Caco-2 (cell line): ENCODE measurements at regions of chr20 and their contacts with region 1.

Region 1: DNA sequence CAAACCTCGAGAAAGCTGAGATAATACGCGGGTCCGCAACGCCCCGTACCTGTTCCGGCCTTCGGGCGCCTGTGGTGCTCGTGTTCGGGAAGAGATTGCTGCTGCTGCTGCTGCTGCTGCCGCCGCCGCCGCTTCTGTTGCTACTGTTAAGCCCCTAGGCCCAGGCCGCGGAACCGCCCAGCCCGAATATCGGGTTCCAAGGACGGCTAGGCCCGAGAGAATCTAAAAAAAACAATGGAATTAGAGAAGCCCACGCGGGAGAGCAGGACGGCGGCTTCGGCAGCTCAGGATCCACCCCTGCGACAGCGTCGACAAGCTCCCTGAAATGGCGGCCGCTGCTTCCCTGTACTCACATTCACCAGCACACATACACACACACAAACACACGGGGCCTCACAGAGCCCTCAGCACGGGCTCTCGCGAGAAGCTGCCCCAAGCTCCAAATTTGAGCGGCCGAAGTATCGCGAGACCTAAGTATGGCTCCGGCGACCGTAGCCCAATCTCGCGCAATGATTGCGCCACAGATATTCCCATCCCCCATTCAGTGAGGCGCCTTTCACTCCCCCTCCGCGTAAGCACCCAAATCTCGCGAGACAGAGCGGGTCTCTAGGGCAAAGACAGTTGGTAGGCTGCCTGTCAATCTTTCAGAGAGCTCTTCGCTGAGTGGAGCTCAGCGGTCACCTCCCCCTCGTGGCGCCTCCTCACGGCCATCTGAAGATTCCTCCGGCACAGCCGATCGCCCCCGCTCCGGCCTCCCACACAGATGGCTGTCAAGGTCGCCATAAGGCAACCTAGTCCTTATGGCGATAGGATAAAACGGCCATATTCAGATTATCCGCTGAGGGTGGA is at the start of gene RBM39:
- DNase-seq: peak; percentile 100
- H3K4me3 ChIP-seq: peak within 1 kb of the TSS; percentile 77
- H3K4me3 Mint-ChIP-seq: peak within 1 kb of the TSS; percentile 80
- H3K27ac Mint-ChIP-seq: peak within 1 kb of the TSS; percentile 96
- H3K4me1 ChIP-seq: peaks cover 31% of the 10 kb centered on the region
- H3K4me1 Mint-ChIP-seq: peaks cover 34% of the 10 kb centered on the region
- H3K27me3 ChIP-seq: no peaks in the 10 kb centered on the region
- H3K27me3 Mint-ChIP-seq: no peaks in the 10 kb centered on the region
- CTCF ChIP-seq: peak; percentile 52 to 65
- total RNA-seq, gene RBM39: 750 and 777 TPM in 2 replicates

Region 2: DNA sequence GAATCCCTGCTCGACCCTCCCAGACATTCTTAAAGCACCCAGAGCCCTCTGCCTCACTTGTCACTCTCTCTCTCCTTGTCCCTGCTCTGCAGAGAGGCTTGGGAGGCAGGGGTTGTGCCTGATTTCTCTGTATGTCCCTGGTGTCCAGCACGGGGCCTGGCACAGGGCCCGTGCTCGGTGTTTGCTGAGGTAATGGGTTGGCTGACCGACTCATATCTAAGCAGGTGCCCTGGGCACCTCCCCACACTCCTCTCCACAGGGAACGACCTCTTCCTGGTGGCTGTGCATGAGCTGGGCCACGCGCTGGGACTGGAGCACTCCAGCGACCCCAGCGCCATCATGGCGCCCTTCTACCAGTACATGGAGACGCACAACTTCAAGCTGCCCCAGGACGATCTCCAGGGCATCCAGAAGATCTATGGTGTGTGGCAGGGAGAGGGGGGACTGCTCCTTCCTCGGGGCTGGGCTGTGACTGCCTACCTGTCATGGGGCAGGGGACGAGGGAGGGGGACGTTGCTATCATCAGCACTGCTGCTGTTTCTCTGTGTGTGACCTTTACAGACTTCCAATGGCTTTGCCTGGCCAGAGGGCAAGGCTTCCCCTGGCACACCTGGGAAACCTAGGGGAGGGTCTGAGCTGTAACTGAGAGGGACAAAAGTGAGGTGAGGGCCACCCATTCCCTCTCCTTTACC is 478.4 kb before region 1 on chr20:
- CTCF ChIA-PET with region 1: no interaction called
- POLR2A ChIA-PET with region 1: interaction called, 14 read pairs
- intact Hi-C with region 1: no loop called
- DNase-seq: peak in 1 of 2 experiments; percentile 57
- H3K4me3 ChIP-seq: peak overlapping the region; percentile 13
- H3K4me3 Mint-ChIP-seq: peak overlapping the region; percentile 63
- H3K27ac Mint-ChIP-seq: peak overlapping the region; percentile 98
- H3K4me1 ChIP-seq: peaks cover 65% of the 10 kb centered on the region
- H3K4me1 Mint-ChIP-seq: peaks cover 48% of the 10 kb centered on the region
- H3K27me3 ChIP-seq: no peaks in the 10 kb centered on the region
- H3K27me3 Mint-ChIP-seq: no peaks in the 10 kb centered on the region
- CTCF ChIP-seq: no peak

Region 3: DNA sequence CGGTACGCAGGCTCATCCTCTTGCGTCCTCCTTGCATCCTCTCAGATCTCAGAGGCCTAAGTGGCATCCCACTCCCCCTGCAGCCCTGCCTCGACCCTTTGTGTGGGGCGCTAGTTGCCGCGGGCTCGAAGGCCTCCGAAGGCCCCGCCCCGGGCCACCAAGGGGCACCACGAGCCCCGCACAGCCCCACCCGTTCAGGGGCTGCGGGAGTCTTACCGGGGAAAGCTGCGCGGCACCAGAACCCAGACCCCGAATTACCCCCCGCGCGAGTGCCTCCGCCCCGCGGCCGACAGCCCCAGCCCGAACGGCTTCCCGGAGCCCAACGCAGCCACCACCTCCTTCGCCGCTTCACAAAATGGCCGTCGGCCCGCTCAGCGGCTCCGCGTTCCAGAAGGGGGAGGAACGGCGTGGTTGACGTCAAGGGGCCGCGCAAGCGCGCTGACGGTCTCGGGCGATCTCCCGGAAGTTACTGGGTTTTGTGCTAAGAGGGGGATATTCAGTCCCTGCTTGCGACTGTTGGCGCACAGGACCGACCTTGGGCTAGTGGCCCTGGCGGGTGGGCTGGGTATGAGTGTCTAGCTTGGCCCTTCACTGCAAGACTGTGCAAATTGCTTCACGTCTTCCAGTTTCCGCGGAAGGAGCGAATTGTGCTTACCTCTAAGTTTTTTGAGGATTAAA is 77.4 kb before region 1 on chr20 and contains the starts of genes CPNE1 and RBM12:
- CTCF ChIA-PET with region 1: interaction called, 6 read pairs
- POLR2A ChIA-PET with region 1: interaction called, 57 read pairs
- intact Hi-C with region 1: loop called (anchors 2 kb)
- DNase-seq: peak; percentile 99
- H3K4me3 ChIP-seq: peak within 1 kb of the TSS; percentile 87
- H3K4me3 Mint-ChIP-seq: peak within 1 kb of the TSS; percentile 84
- H3K27ac Mint-ChIP-seq: peak within 1 kb of the TSS; percentile 96
- H3K4me1 ChIP-seq: peaks cover 30% of the 10 kb centered on the region
- H3K4me1 Mint-ChIP-seq: peaks cover 22% of the 10 kb centered on the region
- H3K27me3 ChIP-seq: no peaks in the 10 kb centered on the region
- H3K27me3 Mint-ChIP-seq: no peaks in the 10 kb centered on the region
- CTCF ChIP-seq: no peak
- total RNA-seq, gene CPNE1: 815 and 833 TPM in 2 replicates
- total RNA-seq, gene RBM12: 146 and 147 TPM in 2 replicates

Region 4: DNA sequence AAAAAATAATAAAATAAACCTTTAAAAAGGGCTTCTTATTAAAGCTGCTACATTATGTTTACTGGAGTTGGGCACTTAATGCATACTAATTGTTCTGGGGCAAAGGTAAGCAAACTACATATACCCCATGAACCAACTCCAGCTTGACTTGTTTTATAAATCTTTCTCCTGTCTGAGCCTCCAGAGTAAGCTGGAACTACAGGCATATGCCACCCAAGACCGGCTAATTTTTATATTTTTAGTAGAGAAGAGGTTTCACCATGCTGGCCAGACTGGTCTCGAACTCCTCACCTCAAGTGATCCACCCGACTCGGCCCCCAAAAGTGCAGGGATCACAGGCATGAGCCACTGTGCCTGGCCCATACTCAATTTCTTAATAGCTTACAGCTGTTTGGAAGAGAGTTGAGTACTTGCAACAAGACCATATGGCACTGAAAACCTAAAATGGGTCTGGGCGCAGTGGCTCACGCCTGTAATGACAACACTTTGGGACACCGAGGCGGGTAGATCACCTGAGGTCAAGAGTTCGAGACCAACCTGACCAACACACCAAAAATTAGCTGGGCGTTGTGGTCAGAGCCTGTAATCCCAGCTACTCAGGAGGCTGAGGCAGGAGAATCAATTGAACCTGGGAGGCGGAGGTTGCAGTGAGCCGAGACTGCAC is 23.0 kb before region 1 on chr20:
- CTCF ChIA-PET with region 1: interaction called, 3 read pairs
- POLR2A ChIA-PET with region 1: interaction called, 25 read pairs
- intact Hi-C with region 1: no loop called
- DNase-seq: no peak
- H3K4me3 ChIP-seq: no peak overlapping the region
- H3K4me3 Mint-ChIP-seq: no peak overlapping the region
- H3K27ac Mint-ChIP-seq: no peak overlapping the region
- H3K4me1 ChIP-seq: 0 out of 2 replicates have a peak, but pooled peaks cover 3% of the 10 kb centered on the region
- H3K4me1 Mint-ChIP-seq: peaks cover 7% of the 10 kb centered on the region
- H3K27me3 ChIP-seq: no peaks in the 10 kb centered on the region
- H3K27me3 Mint-ChIP-seq: no peaks in the 10 kb centered on the region
- CTCF ChIP-seq: no peak

Region 5: GRCh38 chr20:35771689-35772562 is 29.8 kb after region 1 on chr20 and contains the start of gene PHF20:
- CTCF ChIA-PET with region 1: interaction called, 18 read pairs
- POLR2A ChIA-PET with region 1: interaction called, 161 read pairs
- intact Hi-C with region 1: loop called (anchors 1 kb)
- DNase-seq: peak; percentile 100
- H3K4me3 ChIP-seq: peak within 1 kb of the TSS; percentile 73
- H3K4me3 Mint-ChIP-seq: peak within 1 kb of the TSS; percentile 80
- H3K27ac Mint-ChIP-seq: peak within 1 kb of the TSS; percentile 90
- H3K4me1 ChIP-seq: peaks cover 58% of the 10 kb centered on the region
- H3K4me1 Mint-ChIP-seq: peaks cover 54% of the 10 kb centered on the region
- H3K27me3 ChIP-seq: no peaks in the 10 kb centered on the region
- H3K27me3 Mint-ChIP-seq: no peaks in the 10 kb centered on the region
- CTCF ChIP-seq: no peak
- total RNA-seq, gene PHF20: 101 and 109 TPM in 2 replicates

Region 6: DNA sequence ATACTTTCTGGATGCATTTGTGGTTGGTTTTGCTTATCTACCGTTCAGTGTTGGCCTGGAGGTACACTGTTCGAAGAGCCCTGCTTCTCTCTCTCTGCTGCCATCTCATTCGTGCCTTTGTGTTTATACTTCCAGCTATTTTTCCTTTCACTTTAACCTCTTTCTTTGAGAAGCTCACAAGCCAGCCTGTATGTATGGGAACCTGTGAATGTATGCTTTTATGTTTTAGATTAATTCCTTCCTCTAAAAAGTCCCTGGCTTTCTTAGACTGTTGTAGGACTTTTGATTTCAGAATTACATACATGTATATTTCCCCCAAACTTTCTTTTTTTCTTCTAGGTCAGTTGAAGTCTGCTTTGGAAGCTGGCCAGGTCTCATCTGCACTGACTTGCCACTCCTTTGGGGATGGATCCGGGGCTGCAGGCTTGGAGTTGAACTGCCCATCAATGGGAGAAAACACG is 129.2 kb after region 1 on chr20:
- CTCF ChIA-PET with region 1: interaction called, 7 read pairs
- POLR2A ChIA-PET with region 1: interaction called, 18 read pairs
- intact Hi-C with region 1: no loop called
- DNase-seq: no peak
- H3K4me3 ChIP-seq: no peak overlapping the region
- H3K4me3 Mint-ChIP-seq: no peak overlapping the region
- H3K27ac Mint-ChIP-seq: peak overlapping the region; percentile 19
- H3K4me1 ChIP-seq: peaks cover 14% of the 10 kb centered on the region
- H3K4me1 Mint-ChIP-seq: peaks cover 11% of the 10 kb centered on the region
- H3K27me3 ChIP-seq: no peaks in the 10 kb centered on the region
- H3K27me3 Mint-ChIP-seq: no peaks in the 10 kb centered on the region
- CTCF ChIP-seq: no peak

Region 7: GRCh38 chr20:36085686-36086267 is 343.7 kb after region 1 on chr20:
- CTCF ChIA-PET with region 1: no interaction called
- POLR2A ChIA-PET with region 1: interaction called, 5 read pairs
- intact Hi-C with region 1: loop called (anchors 5 kb)
- DNase-seq: peak; percentile 95 to 99
- H3K4me3 ChIP-seq: no peak overlapping the region
- H3K4me3 Mint-ChIP-seq: peak overlapping the region; percentile 66
- H3K27ac Mint-ChIP-seq: peak overlapping the region; percentile 99
- H3K4me1 ChIP-seq: peaks cover 80% of the 10 kb centered on the region
- H3K4me1 Mint-ChIP-seq: peaks cover 67% of the 10 kb centered on the region
- H3K27me3 ChIP-seq: no peaks in the 10 kb centered on the region
- H3K27me3 Mint-ChIP-seq: no peaks in the 10 kb centered on the region
- CTCF ChIP-seq: no peak